ENCODE measurements at regions of chr6 and their contacts with region 1.

Region 1: GRCh38 chr6:161498359-161498758 is 224.5 kb upstream of the AGPAT4 start:
- H3K4me3 ChIP-seq: no peak overlapping the region
- H3K27ac ChIP-seq: no peak overlapping the region
- H3K4me1 ChIP-seq: no peaks in the 10 kb centered on the region
- CTCF ChIP-seq: peak; percentile 69

Region 2: GRCh38 chr6:161393839-161394364 is 104.5 kb before region 1 on chr6:
- CTCF ChIA-PET with region 1: interaction called, 70 read pairs
- POLR2A ChIA-PET with region 1: no interaction called
- H3K4me3 ChIP-seq: no peak overlapping the region
- H3K27ac ChIP-seq: no peak overlapping the region
- H3K4me1 ChIP-seq: no peaks in the 10 kb centered on the region
- CTCF ChIP-seq: peak; percentile 49; the same call in 1 of the 2 replicates

Region 3: GRCh38 chr6:161439093-161439492 is 59.3 kb before region 1 on chr6:
- CTCF ChIA-PET with region 1: interaction called, 16 read pairs
- POLR2A ChIA-PET with region 1: no interaction called
- H3K4me3 ChIP-seq: no peak overlapping the region
- H3K27ac ChIP-seq: no peak overlapping the region
- H3K4me1 ChIP-seq: no peaks in the 10 kb centered on the region
- CTCF ChIP-seq: no peak

Region 4: GRCh38 chr6:161486361-161487216 is 11.8 kb before region 1 on chr6:
- CTCF ChIA-PET with region 1: interaction called, 14 read pairs
- POLR2A ChIA-PET with region 1: no interaction called
- H3K4me3 ChIP-seq: no peak overlapping the region
- H3K27ac ChIP-seq: no peak overlapping the region
- H3K4me1 ChIP-seq: no peaks in the 10 kb centered on the region
- CTCF ChIP-seq: no peak